GM13977 (cell line): ENCODE measurements at regions of chr9 and their contacts with region 1.

Region 1: DNA sequence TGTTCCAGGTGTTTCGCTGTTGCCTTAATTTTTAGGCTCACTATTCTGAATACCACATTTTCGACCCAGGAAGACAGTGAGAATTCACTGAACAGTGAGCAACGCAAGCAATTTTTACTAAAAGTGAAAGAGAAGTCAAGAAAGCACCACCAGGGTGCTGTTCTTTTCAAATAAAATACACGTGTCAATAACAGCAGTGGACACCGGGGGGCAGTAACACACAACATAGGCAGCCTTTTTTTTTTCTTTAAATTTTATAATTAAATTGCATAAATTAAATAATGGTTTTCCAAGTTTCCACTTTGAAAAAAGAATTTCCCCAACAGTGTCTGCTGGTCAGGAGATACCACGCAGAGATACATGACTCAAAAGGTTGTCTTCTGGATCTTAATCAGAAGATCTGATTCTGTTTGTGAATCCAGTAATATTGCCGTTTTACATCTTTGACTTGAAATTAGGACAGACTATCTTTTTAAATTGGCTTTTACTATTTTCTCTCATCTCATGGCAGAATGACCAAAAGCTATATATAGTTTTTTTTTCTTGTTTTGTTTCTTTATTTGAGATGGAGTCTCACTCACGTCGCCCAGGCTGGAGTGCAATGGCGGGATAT is 47.1 kb upstream of the SH3GL2 start:
- DNase-seq: peak; percentile 59
- CTCF ChIP-seq: peak; percentile 69

Region 2: DNA sequence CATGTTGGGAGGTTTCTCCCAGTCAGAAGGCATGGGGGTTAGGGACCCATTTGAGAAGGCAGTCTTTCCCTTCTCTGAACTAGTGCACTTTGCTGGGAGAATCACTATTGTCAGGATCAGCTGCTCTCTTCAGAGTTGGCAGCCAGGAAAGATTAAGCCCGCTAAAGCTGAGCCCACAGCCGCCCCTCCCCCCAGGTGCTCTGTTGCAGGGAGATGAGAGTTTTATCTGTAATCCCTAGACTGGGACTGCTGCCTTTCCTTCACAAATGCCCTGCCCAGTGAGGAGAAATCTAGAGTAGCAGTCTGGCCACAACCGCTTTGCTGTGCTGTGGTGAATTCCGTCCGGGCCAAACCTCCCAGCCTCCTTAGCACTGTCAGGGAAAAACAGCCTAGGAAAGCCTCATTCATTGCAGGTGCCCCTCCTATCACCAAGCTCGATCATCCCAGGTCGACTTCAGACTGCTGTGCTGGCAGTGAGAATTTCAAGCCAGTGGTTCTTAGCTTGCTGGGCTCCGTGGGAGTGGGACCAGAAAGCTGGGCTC is 327.1 kb before region 1 on chr9:
- in situ Hi-C with region 1: no loop called
- DNase-seq: no peak
- CTCF ChIP-seq: no peak

Region 3: GRCh38 chr9:17476401-17476800 is 55.3 kb before region 1 on chr9:
- in situ Hi-C with region 1: no loop called
- DNase-seq: no peak
- CTCF ChIP-seq: no peak

Region 4: GRCh38 chr9:17810728-17811571 is 279.2 kb after region 1 on chr9:
- in situ Hi-C with region 1: loop called (anchors 25 kb)
- DNase-seq: peak; percentile 42
- CTCF ChIP-seq: peak; percentile 80

Region 5: DNA sequence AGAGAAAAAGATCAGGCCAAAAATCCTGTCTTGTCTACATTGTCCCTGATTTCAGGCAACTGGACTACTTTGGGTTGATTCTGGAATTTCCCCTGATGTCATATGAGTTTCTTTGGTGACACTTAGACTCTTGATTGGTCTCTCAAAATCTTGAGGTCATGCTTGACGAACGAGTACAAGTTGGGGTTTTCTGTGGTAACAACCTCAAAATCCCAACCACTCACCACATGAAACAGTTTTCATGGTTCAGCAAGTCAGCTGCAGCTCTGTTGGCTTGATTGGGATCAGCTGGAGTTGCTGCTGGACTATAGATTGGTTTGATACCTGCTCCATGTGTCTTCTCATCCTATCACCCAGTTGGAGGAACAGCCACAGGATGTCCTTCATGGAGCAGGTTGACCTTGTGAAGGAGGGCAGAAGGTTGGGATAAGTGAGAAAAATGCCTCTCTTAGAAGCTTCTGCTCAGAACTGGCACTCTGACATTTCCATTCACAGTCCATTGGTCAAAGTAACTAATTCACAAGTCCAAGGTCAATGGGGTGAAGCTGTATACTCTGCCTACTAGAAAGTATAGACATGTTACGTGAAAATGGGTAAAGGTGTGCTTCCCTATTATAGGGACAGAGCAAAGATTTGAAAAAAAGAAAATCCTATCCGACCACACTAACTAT is 331.6 kb after region 1 on chr9:
- in situ Hi-C with region 1: no loop called
- DNase-seq: peak; percentile 46
- CTCF ChIP-seq: no peak

Region 6: GRCh38 chr9:17994700-17995430 is 463.1 kb after region 1 on chr9:
- in situ Hi-C with region 1: no loop called
- DNase-seq: no peak
- CTCF ChIP-seq: no peak

Region 7: GRCh38 chr9:18208154-18209059 is 676.7 kb after region 1 on chr9:
- in situ Hi-C with region 1: loop called (anchors 25 kb)
- DNase-seq: no peak
- CTCF ChIP-seq: peak; percentile 32